Aorta (tissue), 5 donors: ENCODE measurements at regions of chr7 and their contacts with region 1.

Region 1: DNA sequence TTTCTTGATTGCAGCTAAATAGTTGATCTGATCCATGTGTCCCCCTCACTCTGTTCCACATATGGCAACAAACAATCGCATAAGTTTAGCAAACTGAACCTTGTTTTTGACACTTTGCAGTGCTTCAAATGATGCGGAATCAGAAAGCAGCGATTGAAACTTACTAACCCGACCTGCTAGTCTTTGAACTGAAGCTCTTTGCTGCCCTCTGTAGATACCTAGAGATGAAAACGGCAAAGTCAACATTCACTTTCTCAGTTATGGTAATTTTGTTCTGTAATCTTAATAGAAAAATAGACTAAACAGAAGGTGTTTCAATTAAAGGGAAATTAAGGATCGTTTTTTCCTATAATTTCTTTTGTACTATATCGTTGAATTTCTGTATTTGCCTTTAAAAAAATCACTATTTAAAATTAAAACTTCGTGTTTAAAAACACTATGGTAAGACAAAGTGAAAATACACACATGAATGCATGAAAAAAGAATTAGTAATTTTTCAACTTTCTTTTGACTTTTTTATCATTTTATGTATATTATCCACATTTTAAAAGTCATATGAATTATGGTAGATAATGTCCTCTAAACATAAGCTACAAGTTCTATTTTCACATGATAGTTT is 276.5 kb downstream of the MAGI2 start:
- DNase-seq: no peak
- ATAC-seq: peak; percentile 69
- H3K4me3 ChIP-seq: no peak overlapping the region
- H3K27ac ChIP-seq: no peak overlapping the region
- H3K4me1 ChIP-seq: no peaks in the 10 kb centered on the region
- H3K27me3 ChIP-seq: no peaks in the 10 kb centered on the region

Region 2: GRCh38 chr7:78134256-78134655 is 1042.7 kb before region 1 on chr7:
- intact Hi-C with region 1: loop called in 1 of 2 experiments (anchors 10 kb)
- DNase-seq: no peak
- ATAC-seq: no peak
- H3K4me3 ChIP-seq: no peak overlapping the region
- H3K27ac ChIP-seq: no peak overlapping the region
- H3K4me1 ChIP-seq: peaks cover 0 to under 1% of the 10 kb centered on the region in 2 donors
- H3K27me3 ChIP-seq: no peaks in the 10 kb centered on the region

Region 3: GRCh38 chr7:78510580-78511188 is 666.3 kb before region 1 on chr7:
- intact Hi-C with region 1: loop called (anchors 5 to 10 kb)
- DNase-seq: no peak
- ATAC-seq: no peak
- H3K4me3 ChIP-seq: no peak overlapping the region
- H3K27ac ChIP-seq: no peak overlapping the region
- H3K4me1 ChIP-seq: peaks cover 0 to 1% of the 10 kb centered on the region in 2 donors
- H3K27me3 ChIP-seq: no peaks in the 10 kb centered on the region